ENCODE measurements at regions of chr3 and their contacts with region 1.

Region 1: DNA sequence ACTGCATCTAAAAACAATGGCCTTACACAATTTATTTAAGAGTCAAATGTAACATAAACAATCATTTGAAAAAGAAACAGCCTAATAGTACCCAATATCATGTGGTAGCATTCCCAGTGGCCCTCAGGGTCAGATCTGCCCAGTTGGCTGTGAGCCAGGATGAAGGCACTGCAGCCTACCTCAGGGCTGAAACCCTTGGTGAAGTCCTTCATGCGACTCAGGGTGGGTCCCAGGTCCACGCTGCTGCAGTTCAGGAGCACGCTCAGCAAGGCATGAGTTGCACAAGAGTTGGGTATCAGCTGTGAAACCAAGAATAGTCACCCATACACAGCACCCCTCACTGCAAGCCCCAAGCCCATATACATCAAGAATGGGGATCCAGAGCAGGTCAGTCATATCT is 37.1 kb downstream of the SEMA3G start:
- DNase-seq: no peak
- H3K4me3 Mint-ChIP-seq: peak overlapping the region; percentile 94
- H3K27ac Mint-ChIP-seq: no peak overlapping the region
- H3K4me1 Mint-ChIP-seq: peaks cover 31% of the 10 kb centered on the region
- H3K27me3 Mint-ChIP-seq: no peaks in the 10 kb centered on the region

Region 2: GRCh38 chr3:52428151-52429005 is 20.6 kb after region 1 on chr3:
- intact Hi-C with region 1: loop called (anchors 1 kb)
- DNase-seq: no peak
- H3K4me3 Mint-ChIP-seq: no peak overlapping the region
- H3K27ac Mint-ChIP-seq: no peak overlapping the region
- H3K4me1 Mint-ChIP-seq: peaks cover 7% of the 10 kb centered on the region
- H3K27me3 Mint-ChIP-seq: peaks cover 11% of the 10 kb centered on the region

Region 3: GRCh38 chr3:52645549-52645948 is 237.8 kb after region 1 on chr3:
- intact Hi-C with region 1: no loop called
- DNase-seq: no peak
- H3K4me3 Mint-ChIP-seq: no peak overlapping the region
- H3K27ac Mint-ChIP-seq: no peak overlapping the region
- H3K4me1 Mint-ChIP-seq: peaks cover 7% of the 10 kb centered on the region
- H3K27me3 Mint-ChIP-seq: no peaks in the 10 kb centered on the region

Measured in activated T-helper 2 cell treated with anti-CD3 and anti-CD28 coated beads, Interferon-gamma antibody, Interleukin-2, Interleukin-4, amounts not matched to agents 10 μg/mL and 5 μg/mL and 100 μg/mL, durations not matched to agents 14 hours and 24 hours and 36 hours (primary cell).